Activated T-helper 2 cell treated with anti-CD3 and anti-CD28 coated beads, Interferon-gamma antibody, Interleukin-2, Interleukin-4, amounts not matched to agents 10 μg/mL and 5 μg/mL and 100 μg/mL, durations not matched to agents 14 hours and 24 hours and 36 hours (primary cell): ENCODE measurements at regions of chr7 and their contacts with region 1.

Region 1: GRCh38 chr7:150448789-150449147 is 1.7 kb upstream of the GIMAP8 start:
- DNase-seq: peak; percentile 81
- H3K4me3 Mint-ChIP-seq: peak overlapping the region; percentile 54
- H3K27ac Mint-ChIP-seq: peak overlapping the region; percentile 78
- H3K4me1 Mint-ChIP-seq: peaks cover 53% of the 10 kb centered on the region
- H3K27me3 Mint-ChIP-seq: no peaks in the 10 kb centered on the region

Region 2: GRCh38 chr7:150481186-150481920 is 32.6 kb after region 1 on chr7:
- intact Hi-C with region 1: loop called (anchors 1 kb)
- DNase-seq: peak; percentile 40
- H3K4me3 Mint-ChIP-seq: peak overlapping the region; percentile 71
- H3K27ac Mint-ChIP-seq: peak overlapping the region; percentile 99
- H3K4me1 Mint-ChIP-seq: peaks cover 79% of the 10 kb centered on the region
- H3K27me3 Mint-ChIP-seq: no peaks in the 10 kb centered on the region

Region 3: DNA sequence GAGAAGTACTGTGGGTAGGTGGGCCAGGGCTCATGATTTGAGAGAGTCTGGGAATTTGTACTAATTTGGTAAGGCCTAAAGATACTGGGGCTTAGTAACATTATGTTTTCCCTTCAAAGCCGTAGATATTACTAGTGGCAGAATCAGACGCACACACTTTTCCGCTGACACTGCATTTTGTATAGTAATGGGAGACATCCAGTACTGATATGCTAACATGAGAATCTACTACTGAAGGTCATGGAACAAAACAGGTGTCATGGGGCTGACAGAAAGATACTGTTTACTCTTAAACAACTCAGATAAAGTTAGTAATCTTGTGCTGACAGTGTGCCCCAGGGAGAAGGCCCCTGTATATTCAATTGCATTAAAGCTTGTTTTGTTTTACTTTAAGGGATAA is 54.8 kb after region 1 on chr7:
- intact Hi-C with region 1: no loop called
- DNase-seq: no peak
- H3K4me3 Mint-ChIP-seq: no peak overlapping the region
- H3K27ac Mint-ChIP-seq: peak overlapping the region; percentile 81
- H3K4me1 Mint-ChIP-seq: peaks cover 66% of the 10 kb centered on the region
- H3K27me3 Mint-ChIP-seq: no peaks in the 10 kb centered on the region

Region 4: GRCh38 chr7:150514748-150515222 is 66.0 kb after region 1 on chr7 and contains the start of gene GIMAP7:
- intact Hi-C with region 1: loop called (anchors 1 kb)
- DNase-seq: peak; percentile 63
- H3K4me3 Mint-ChIP-seq: peak within 1 kb of the TSS; percentile 89
- H3K27ac Mint-ChIP-seq: peak within 1 kb of the TSS; percentile 89
- H3K4me1 Mint-ChIP-seq: peaks cover 45% of the 10 kb centered on the region
- H3K27me3 Mint-ChIP-seq: no peaks in the 10 kb centered on the region
- total RNA-seq, gene GIMAP7: 22.6 and 24.1 TPM in 2 replicates

Region 5: DNA sequence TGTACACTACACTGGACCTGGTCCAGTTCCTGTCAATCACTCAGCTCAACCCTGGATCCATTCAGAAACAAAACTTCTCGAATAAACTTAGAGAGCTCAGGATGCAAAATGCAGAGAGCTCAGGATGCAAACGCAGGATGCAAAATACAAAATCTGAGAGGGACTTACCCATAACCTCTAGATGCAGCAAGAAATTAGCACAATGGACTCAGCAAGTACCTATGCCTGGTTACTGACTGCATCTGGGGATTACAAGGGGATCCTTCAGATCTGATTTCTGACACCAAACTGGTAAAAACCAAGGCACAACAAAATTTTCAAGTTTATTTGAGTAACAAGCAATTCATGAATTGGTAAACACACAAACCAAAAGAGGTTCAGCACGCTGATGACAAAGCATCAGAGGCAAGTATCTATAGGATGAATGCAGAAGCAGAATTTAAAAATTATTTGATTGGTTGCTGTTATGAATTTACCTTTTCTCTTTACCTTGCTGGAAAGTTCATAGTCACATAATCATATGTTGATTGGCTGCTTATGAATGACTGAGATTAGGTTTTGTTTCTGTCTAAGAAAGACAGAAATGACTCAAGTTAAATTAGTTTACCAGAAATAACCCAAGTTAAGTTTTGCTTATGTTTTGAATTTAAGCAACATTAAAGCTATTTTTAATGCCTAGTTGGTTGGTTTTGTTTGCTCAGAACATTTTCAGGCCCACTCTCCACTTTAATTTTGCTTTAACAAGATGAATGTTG is 172.0 kb after region 1 on chr7:
- intact Hi-C with region 1: loop called (anchors 2 kb)
- DNase-seq: no peak
- H3K4me3 Mint-ChIP-seq: no peak overlapping the region
- H3K27ac Mint-ChIP-seq: peak overlapping the region; percentile 62
- H3K4me1 Mint-ChIP-seq: peaks cover 50% of the 10 kb centered on the region
- H3K27me3 Mint-ChIP-seq: no peaks in the 10 kb centered on the region

Region 6: GRCh38 chr7:150685219-150686029 is 236.7 kb after region 1 on chr7 and contains the start of gene GIMAP2:
- intact Hi-C with region 1: loop called (anchors 2 kb)
- DNase-seq: no peak
- H3K4me3 Mint-ChIP-seq: peak within 1 kb of the TSS; percentile 99
- H3K27ac Mint-ChIP-seq: peak within 1 kb of the TSS; percentile 99
- H3K4me1 Mint-ChIP-seq: peaks cover 53% of the 10 kb centered on the region
- H3K27me3 Mint-ChIP-seq: no peaks in the 10 kb centered on the region
- total RNA-seq, gene GIMAP2: 29.3 and 30.5 TPM in 2 replicates

Region 7: GRCh38 chr7:150727381-150727780 is 278.6 kb after region 1 on chr7:
- intact Hi-C with region 1: no loop called
- DNase-seq: no peak
- H3K4me3 Mint-ChIP-seq: no peak overlapping the region
- H3K27ac Mint-ChIP-seq: no peak overlapping the region
- H3K4me1 Mint-ChIP-seq: peaks cover 36% of the 10 kb centered on the region
- H3K27me3 Mint-ChIP-seq: no peaks in the 10 kb centered on the region